ENCODE measurements at regions of chr18 and their contacts with region 1.

Region 1: DNA sequence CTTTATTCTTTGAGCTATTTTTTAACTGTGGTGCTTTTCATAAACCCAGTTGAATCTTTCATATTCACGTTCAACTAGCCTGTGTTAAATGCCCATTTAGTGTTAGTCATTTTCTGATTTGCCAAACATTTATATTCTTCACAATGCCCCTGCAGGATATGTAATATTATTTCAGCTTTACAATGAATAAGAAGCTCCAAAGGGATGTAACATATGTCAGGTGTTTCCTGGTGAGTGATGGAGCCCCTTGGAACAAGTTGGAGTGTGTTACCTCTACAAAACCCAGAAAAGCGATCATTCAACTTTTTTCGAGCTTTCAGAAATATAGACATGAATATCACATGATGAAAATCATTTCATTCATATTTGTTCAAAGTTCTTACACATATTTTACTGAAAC is 471.0 kb upstream of the CDH2 start:
- DNase-seq: no peak
- H3K4me3 Mint-ChIP-seq: no peak overlapping the region
- H3K27ac Mint-ChIP-seq: no peak overlapping the region
- H3K4me1 Mint-ChIP-seq: no peaks in the 10 kb centered on the region
- H3K27me3 Mint-ChIP-seq: no peaks in the 10 kb centered on the region

Region 2: DNA sequence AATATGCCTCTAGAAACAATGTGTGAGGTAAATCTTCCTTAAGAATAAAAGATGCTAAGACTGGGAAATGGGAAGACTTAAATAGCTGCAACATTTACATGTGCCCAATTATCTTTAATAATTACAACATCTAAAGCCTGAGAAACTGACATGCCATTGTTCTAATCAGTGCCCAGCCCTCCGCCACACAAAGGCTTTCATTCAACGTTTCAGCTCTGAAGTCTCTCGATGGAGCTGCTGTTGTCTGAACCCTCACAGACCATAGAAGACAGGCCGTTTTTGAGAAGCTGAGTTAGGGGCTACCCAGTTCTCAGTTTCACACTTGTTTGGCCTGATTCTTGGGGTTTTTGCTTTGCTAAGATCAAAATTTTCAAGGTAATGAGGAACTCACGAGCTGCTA is 1147.4 kb before region 1 on chr18:
- CTCF ChIA-PET with region 1: no interaction called
- POLR2A ChIA-PET with region 1: no interaction called
- intact Hi-C with region 1: no loop called
- DNase-seq: no peak
- H3K4me3 Mint-ChIP-seq: no peak overlapping the region
- H3K27ac Mint-ChIP-seq: no peak overlapping the region
- H3K4me1 Mint-ChIP-seq: no peaks in the 10 kb centered on the region
- H3K27me3 Mint-ChIP-seq: no peaks in the 10 kb centered on the region

Region 3: DNA sequence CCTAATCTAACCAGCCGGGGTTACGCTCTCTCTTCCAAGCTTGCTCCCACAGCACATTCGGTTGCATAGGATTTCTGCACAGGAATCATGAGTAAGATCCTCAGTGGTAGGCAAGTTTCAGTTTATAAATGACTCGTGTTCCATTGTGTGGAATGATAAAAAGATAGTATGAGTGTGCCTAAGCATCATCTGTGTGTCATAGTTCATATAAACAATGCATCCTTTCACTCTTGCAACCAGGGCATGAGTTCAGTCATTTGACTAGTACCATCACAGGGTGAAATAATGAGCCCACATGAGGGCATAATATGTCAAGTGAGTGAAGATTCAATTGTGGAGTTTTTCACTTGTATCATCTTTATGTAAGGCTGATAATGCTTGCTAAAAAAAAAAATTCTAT is 53.9 kb before region 1 on chr18:
- CTCF ChIA-PET with region 1: no interaction called
- POLR2A ChIA-PET with region 1: no interaction called
- intact Hi-C with region 1: loop called (anchors 10 kb)
- DNase-seq: no peak
- H3K4me3 Mint-ChIP-seq: no peak overlapping the region
- H3K27ac Mint-ChIP-seq: no peak overlapping the region
- H3K4me1 Mint-ChIP-seq: no peaks in the 10 kb centered on the region
- H3K27me3 Mint-ChIP-seq: no peaks in the 10 kb centered on the region

Measured in activated CD4-positive, alpha-beta memory T cell treated with anti-CD3 and anti-CD28 coated beads for 36 hours (primary cell).